ENCODE measurements at regions of chr19 and their contacts with region 1.

Region 1: DNA sequence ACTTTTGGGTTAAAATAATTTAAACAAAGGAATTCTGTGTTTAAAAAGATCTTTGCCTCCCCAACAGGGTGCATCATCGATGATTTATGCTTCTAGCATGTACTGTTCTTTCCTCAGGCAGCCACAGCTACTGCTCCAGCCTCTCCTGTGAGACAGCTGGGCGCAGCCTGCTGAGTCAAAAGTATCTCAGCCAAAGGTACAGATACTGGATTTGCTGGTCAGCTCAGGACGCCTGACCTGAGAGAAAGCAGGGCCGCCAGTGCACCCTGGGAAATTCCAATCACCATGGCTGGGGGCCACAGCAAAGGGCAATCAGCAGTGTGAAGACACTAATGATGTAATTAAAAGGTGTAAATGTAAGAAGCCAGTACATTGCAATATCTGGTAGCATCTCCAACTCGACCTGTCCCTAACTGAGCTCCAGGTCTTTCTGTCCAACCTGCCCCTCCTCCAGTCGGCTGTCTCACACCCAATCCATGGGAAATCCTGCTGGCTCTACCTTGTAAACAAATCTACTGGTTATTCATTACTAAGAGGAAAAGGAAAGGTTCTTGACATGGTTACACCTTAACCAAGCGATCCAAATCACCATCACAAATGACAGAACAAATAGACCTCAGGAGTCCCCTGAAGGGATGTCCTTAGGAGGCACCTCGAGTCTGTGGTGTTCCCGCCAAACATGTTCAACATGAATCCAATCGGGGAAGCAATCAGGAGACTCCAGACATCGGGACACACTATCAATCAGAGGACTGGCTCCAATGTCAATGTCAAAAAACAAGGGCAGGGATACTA is 7.3 kb downstream of the OPA3 start:
- DNase-seq: no peak
- H3K4me3 ChIP-seq: no peak overlapping the region
- H3K27ac ChIP-seq: peak overlapping the region; percentile 61 to 73 (median 68)
- H3K4me1 ChIP-seq: peaks cover 27 to 45% (median 35%) of the 10 kb centered on the region in 4 donors
- H3K27me3 ChIP-seq: no peaks in the 10 kb centered on the region
- CTCF ChIP-seq: no peak
- EP300 ChIP-seq: no peak
- POLR2A ChIP-seq: no peak

Region 2: GRCh38 chr19:45523642-45524256 is 53.6 kb before region 1 on chr19:
- intact Hi-C with region 1: loop called (anchors 5 kb)
- DNase-seq: peak; percentile 94
- H3K4me3 ChIP-seq: no peak overlapping the region
- H3K27ac ChIP-seq: peak overlapping the region; percentile 47 to 76 (median 62)
- H3K4me1 ChIP-seq: peaks cover 21 to 75% (median 60%) of the 10 kb centered on the region in 4 donors
- H3K27me3 ChIP-seq: no peaks in the 10 kb centered on the region
- CTCF ChIP-seq: peak; percentile 89 to 97 (median 97)
- EP300 ChIP-seq: no peak
- POLR2A ChIP-seq: no peak

Region 3: GRCh38 chr19:45547976-45548609 is 29.2 kb before region 1 on chr19:
- intact Hi-C with region 1: no loop called
- DNase-seq: no peak
- H3K4me3 ChIP-seq: no peak overlapping the region
- H3K27ac ChIP-seq: peak overlapping the region in 1 of 4 donors; percentile 33
- H3K4me1 ChIP-seq: peaks cover 0 to 17% (median 8%) of the 10 kb centered on the region in 4 donors
- H3K27me3 ChIP-seq: no peaks in the 10 kb centered on the region
- CTCF ChIP-seq: no peak
- EP300 ChIP-seq: no peak
- POLR2A ChIP-seq: no peak

Region 4: GRCh38 chr19:45558399-45558878 is 18.9 kb before region 1 on chr19:
- intact Hi-C with region 1: no loop called
- DNase-seq: no peak
- H3K4me3 ChIP-seq: no peak overlapping the region
- H3K27ac ChIP-seq: no peak overlapping the region
- H3K4me1 ChIP-seq: peaks cover 0 to 12% (median 9%) of the 10 kb centered on the region in 4 donors
- H3K27me3 ChIP-seq: no peaks in the 10 kb centered on the region
- CTCF ChIP-seq: peak; percentile 44 to 58 (median 50)
- EP300 ChIP-seq: no peak
- POLR2A ChIP-seq: no peak

Measured in esophagus muscularis mucosa (tissue), 4 donors.